PC-3 (cell line): ENCODE measurements at regions of chr20 and their contacts with region 1.

Region 1: DNA sequence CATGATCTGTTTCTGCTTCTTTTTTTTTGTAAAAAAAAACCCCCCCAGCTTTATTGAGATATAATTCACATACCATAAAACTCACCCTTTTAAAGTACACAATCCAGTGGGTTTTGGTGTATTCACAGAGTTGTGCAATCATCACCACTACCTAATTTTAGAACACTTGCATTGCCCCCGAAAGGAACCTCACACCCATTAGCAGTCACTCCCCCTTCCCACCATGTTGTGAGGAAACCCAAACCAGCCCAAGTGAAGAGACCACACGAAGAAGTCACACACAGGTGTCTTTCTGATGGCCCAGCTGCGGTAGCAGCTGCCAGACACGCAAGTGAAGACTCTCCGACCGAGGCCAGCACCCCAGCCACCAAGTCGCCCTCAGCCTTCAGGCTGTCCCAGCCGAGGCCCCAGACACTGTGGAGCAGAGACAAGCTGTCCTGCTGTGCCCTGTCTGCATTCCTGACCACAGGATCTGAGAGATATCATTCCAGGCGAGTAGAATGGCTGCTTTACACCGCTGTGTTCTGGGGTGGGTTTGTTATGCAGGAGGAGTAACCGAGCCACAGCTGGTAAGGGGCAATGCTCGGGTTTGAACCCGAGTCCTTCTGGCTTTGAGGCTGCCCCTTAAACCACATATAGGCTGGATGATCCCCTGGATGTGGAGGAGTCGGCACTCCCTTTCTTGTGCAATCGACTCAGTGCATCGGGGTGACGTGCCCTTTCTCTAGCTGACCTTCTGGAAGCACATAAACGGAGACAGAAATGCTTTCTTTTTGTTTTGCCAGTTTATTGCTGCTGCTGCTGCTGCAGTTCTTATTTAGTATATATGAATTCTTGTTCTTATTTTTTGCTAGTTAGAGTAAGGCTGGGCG is 59.1 kb upstream of the PTPN1 start:
- DNase-seq: no peak
- ATAC-seq: no peak
- H3K4me3 ChIP-seq: no peak overlapping the region
- H3K27ac ChIP-seq: no peak overlapping the region
- H3K4me1 ChIP-seq: no peaks in the 10 kb centered on the region
- H3K27me3 ChIP-seq: no peaks in the 10 kb centered on the region
- CTCF ChIP-seq: no peak

Region 2: GRCh38 chr20:49888345-49888966 is 562.7 kb before region 1 on chr20:
- CTCF ChIA-PET with region 1: no interaction called
- POLR2A ChIA-PET with region 1: no interaction called
- intact Hi-C with region 1: no loop called
- DNase-seq: peak; percentile 78
- ATAC-seq: peak; percentile 77
- H3K4me3 ChIP-seq: no peak overlapping the region
- H3K27ac ChIP-seq: no peak overlapping the region
- H3K4me1 ChIP-seq: 0 out of 2 replicates have a peak, but pooled peaks cover 5% of the 10 kb centered on the region
- H3K27me3 ChIP-seq: no peaks in the 10 kb centered on the region
- CTCF ChIP-seq: peak; percentile 98

Region 3: DNA sequence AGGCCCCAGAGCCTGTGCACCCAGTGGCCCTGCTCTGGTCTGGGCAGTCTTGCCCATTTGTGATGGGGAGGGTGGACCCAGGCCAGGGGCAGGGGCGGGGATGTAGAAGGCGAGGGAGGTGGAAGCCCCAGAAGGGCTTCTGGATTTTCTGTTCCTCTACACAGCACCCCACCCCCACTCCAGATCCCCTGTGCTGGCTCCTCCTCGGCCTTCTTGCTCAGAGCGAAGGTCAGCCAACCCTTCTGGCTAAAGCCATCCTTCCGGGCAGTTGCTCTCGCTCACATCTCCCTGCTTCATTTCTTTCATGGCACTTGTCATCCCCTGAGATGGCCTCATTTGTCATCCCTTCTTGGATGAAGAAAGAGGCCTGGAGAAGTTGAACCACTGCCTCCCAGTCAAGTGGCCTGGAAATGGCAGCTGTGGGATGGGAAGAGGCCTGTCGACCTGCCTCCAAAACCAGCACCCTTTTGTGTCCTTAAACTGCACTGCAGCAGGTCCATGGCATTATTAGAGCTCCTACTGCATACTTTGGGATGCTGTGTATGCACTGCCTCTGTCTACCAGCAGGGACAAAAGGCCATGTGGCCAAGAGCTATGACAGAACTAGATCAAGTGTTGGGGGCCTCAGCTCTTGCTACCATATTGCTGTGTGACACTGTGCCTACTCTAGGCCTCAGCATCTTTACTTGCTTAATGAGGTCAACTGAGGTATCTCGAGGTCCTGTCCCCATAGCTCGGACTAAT is 317.5 kb before region 1 on chr20:
- CTCF ChIA-PET with region 1: interaction called, 15 read pairs
- POLR2A ChIA-PET with region 1: no interaction called
- intact Hi-C with region 1: no loop called
- DNase-seq: no peak
- ATAC-seq: no peak
- H3K4me3 ChIP-seq: no peak overlapping the region
- H3K27ac ChIP-seq: no peak overlapping the region
- H3K4me1 ChIP-seq: peaks cover 21% of the 10 kb centered on the region
- H3K27me3 ChIP-seq: no peaks in the 10 kb centered on the region
- CTCF ChIP-seq: peak; percentile 37; the same call in 1 of the 2 replicates

Region 4: DNA sequence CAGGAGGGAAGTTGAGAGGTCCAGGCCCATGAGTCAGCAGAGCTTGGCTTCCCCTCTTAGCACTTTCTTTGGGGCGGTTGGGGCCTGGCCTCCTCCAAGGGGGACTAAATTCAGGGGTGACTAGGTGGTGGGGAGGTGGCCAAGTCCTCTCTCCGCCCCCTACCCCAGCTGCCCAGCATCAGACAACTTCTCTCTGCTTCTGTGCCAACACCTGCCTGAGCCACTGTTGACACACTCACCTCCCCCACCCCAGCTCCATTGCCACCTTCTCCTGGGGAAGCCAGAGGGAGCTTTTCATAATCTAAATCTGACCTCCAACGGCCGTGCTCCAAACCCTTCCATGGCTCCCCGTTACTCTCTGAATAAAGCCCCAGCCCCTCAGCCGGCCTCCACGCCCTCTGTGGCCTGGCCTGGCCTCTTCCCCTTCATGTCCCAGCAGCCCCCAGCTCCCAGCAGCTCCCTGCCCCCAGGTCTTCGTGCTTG is 190.3 kb before region 1 on chr20:
- CTCF ChIA-PET with region 1: no interaction called
- POLR2A ChIA-PET with region 1: no interaction called
- intact Hi-C with region 1: no loop called
- DNase-seq: no peak
- ATAC-seq: no peak
- H3K4me3 ChIP-seq: no peak overlapping the region
- H3K27ac ChIP-seq: no peak overlapping the region
- H3K4me1 ChIP-seq: peaks cover 16% of the 10 kb centered on the region
- H3K27me3 ChIP-seq: no peaks in the 10 kb centered on the region
- CTCF ChIP-seq: no peak

Region 5: DNA sequence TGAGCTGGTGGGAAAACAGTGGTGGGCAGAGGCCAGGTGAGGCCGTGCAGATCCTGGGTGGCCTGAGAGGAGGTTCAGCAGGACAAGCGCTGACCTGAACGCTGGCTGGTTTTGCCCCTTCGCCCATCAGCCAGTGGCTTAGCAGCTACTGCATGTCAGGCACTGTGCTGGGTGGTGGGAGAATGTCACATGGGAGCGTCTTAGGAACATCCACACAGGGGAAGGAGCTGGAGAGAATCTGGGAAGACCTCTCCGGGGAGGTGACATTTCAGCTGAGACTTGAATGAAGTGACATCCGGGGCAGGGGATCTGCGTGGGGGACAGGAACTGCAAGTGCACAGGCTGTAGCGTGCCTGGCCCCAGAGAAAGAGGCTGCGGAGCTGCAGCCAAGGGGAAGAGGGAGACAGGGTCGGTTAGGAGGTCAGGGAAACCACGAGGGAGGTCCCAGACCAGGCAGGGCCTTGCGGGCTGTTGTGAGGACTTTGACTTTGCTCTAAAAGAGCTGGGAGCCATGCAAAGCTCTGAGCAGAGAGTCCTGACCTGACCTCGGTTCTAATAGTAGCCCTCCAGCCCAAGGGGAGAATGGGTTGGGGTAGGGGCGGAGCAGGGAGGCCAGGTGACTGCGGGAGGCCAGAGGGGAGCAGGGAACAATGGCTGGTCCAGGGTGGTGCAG is 97.7 kb before region 1 on chr20:
- CTCF ChIA-PET with region 1: no interaction called
- POLR2A ChIA-PET with region 1: no interaction called
- intact Hi-C with region 1: no loop called
- DNase-seq: no peak
- ATAC-seq: no peak
- H3K4me3 ChIP-seq: no peak overlapping the region
- H3K27ac ChIP-seq: no peak overlapping the region
- H3K4me1 ChIP-seq: peaks cover 11% of the 10 kb centered on the region
- H3K27me3 ChIP-seq: no peaks in the 10 kb centered on the region
- CTCF ChIP-seq: no peak

Region 6: DNA sequence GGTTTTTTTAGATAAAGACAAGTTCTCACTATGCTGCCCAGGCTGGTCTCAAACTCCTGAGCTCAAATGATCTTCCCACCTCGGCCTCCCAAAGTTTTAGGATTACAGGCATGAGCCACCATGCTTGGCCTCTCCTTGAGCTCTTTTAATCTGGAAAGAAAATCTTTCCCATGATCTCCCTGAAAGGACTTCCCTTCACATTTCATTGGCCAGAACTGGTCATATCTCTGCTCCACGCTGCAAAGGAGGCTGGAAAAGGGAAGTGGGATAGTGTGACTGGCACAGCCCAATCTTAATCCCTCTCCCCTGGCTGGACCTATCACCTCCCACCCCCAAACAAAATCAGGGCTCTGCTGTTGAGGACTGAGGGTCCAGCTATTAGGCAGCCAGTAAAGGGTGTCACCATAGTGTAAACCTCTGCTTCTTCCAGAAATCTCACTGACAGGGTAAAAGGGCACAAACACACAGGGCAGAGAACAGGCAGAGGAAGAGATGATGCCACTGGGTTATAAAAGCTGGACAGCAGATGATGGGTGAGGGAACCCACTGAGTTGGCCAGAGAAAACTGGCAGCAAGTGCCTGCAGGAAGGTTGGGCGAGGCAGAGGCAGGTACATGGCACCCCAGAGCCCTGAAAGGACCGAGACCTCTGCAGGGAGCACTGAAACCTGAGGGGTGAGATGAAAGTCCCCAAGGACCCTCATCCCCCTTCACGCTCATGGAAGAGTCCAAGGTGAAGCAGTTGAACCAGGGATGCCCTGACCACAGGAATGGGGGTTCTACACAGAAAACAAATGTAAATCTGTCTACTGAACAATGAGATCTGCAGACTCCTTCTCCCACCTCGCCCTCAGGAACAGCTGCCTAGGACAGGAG is 24.0 kb before region 1 on chr20:
- CTCF ChIA-PET with region 1: no interaction called
- POLR2A ChIA-PET with region 1: interaction called, 12 read pairs
- intact Hi-C with region 1: no loop called
- DNase-seq: no peak
- ATAC-seq: no peak
- H3K4me3 ChIP-seq: no peak overlapping the region
- H3K27ac ChIP-seq: no peak overlapping the region
- H3K4me1 ChIP-seq: peaks cover 30% of the 10 kb centered on the region
- H3K27me3 ChIP-seq: no peaks in the 10 kb centered on the region
- CTCF ChIP-seq: no peak

Region 7: DNA sequence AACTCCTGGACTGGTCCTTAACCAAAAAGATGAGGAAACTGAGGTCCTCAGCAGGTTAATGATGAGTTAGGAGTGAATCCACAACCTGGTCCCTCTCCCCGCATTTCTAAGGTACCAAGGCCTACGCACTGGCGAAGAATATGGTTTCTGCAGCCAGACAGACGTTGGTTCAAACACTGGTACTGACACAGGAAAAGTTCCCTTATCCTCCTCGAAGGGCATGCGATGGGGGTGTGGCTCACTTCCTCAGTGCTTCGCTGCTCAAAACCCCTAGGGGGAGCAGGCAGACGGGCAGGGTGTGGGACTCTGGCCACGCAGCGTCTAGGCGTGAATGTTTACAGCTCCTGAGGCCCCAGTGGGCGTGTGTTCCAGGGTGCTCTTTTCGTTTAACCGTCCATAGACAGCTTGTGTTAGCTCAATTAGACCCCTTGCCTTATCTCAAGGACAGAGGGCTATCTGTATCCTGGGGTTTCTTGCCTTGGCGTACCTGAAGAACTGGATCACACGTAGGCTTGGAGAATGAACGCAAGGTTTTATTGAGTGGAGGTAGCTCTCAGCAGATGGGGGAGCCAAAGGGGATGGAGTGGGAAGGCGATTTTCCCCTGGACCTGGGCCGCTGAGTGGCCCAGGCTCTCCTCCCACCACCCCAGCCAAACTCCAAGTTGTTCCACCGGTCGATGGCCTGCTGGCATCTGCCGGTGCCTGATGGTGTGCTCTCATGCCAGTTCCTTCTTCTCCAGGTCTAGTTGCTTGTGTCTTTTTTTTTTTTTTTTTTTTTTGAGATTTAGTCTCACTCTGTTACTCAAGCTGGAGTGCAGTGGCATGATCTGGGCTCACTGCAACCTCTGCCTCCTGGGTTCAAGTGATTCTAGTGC is 27.3 kb after region 1 on chr20:
- CTCF ChIA-PET with region 1: no interaction called
- POLR2A ChIA-PET with region 1: no interaction called
- intact Hi-C with region 1: no loop called
- DNase-seq: peak; percentile 73
- ATAC-seq: peak; percentile 93
- H3K4me3 ChIP-seq: no peak overlapping the region
- H3K27ac ChIP-seq: no peak overlapping the region
- H3K4me1 ChIP-seq: peaks cover 8% of the 10 kb centered on the region; the same call in 1 of the 2 replicates
- H3K27me3 ChIP-seq: no peaks in the 10 kb centered on the region
- CTCF ChIP-seq: peak; percentile 84